MCF 10A (cell line): ENCODE measurements at regions of chr20 and their contacts with region 1.

Region 1: GRCh38 chr20:50425085-50425484 is 85.1 kb upstream of the PTPN1 start:
- DNase-seq: no peak
- H3K4me3 Mint-ChIP-seq: no peak overlapping the region
- H3K27ac Mint-ChIP-seq: peak overlapping the region; percentile 92
- H3K4me1 Mint-ChIP-seq: peaks cover 48% of the 10 kb centered on the region
- H3K27me3 Mint-ChIP-seq: no peaks in the 10 kb centered on the region
- CTCF ChIP-seq: no peak

Region 2: GRCh38 chr20:50115591-50116372 is 309.3 kb before region 1 on chr20:
- CTCF ChIA-PET with region 1: interaction called, 5 read pairs
- POLR2A ChIA-PET with region 1: interaction called, 16 read pairs
- intact Hi-C with region 1: no loop called
- DNase-seq: peak; percentile 97
- H3K4me3 Mint-ChIP-seq: peak overlapping the region; percentile 74
- H3K27ac Mint-ChIP-seq: peak overlapping the region; percentile 89
- H3K4me1 Mint-ChIP-seq: peaks cover 39% of the 10 kb centered on the region
- H3K27me3 Mint-ChIP-seq: no peaks in the 10 kb centered on the region
- CTCF ChIP-seq: no peak

Region 3: DNA sequence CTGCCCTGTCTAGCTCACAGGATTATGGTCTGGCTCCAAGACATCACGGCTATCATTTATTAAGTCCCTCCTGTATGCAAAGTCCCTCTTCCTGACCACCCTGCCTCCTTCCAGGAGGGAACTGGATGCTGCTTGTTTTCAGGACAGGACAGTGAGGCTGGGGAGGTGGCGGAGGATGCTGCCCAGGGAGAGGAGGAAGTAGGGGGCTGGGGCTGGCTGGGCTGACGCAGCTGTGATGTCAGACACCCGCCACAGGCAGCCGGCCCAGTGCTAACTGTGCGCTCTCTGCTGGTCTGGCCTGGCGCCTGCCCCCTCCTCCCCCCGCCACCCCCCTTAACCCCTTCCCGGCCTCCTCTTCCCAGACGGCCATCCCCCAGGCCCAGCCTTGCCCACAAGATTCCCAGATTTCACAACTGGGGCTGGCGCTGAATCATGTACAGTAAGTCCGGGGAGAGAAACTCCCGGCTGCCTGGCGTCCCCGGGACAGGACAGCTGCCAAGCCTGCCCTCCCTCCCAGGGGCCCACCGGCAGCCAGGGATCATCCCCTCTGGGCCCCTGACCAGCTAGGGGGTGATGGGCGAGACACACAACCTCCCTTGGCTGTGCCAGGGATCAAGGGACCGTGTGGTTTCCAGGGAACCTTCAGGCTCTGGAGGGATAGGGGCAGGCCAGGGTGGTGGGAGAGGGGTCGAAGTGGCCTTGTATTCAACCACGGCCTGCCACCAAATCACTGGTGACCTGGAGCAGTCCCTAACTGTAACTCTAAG is 116.4 kb before region 1 on chr20:
- CTCF ChIA-PET with region 1: interaction called, 4 read pairs
- POLR2A ChIA-PET with region 1: interaction called, 13 read pairs
- intact Hi-C with region 1: no loop called
- DNase-seq: peak; percentile 99
- H3K4me3 Mint-ChIP-seq: no peak overlapping the region
- H3K27ac Mint-ChIP-seq: peak overlapping the region; percentile 49
- H3K4me1 Mint-ChIP-seq: peaks cover 66% of the 10 kb centered on the region
- H3K27me3 Mint-ChIP-seq: no peaks in the 10 kb centered on the region
- CTCF ChIP-seq: peak; percentile 6

Region 4: DNA sequence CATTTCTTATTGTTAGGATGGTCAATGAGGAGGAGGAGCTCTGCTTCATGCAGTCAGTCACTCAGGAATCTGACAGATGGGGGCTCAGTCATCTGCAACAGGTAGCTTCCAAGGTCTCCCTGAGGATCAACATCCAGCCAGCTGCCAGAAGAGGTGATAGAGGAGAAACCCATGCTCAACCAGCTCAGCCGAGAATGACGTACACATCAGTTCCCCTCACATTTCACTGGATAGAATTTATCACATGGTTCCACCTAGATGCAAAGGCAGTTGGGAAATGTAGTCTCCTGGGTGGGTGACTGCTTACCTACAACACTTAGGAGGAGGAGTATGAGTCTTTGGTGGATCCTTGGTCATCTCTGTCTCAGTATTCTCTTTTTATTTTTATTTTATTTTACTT is 90.0 kb before region 1 on chr20:
- CTCF ChIA-PET with region 1: interaction called, 7 read pairs
- POLR2A ChIA-PET with region 1: interaction called, 27 read pairs
- intact Hi-C with region 1: no loop called
- DNase-seq: peak; percentile 79
- H3K4me3 Mint-ChIP-seq: no peak overlapping the region
- H3K27ac Mint-ChIP-seq: peak overlapping the region; percentile 91
- H3K4me1 Mint-ChIP-seq: peaks cover 49% of the 10 kb centered on the region
- H3K27me3 Mint-ChIP-seq: no peaks in the 10 kb centered on the region
- CTCF ChIP-seq: no peak

Region 5: DNA sequence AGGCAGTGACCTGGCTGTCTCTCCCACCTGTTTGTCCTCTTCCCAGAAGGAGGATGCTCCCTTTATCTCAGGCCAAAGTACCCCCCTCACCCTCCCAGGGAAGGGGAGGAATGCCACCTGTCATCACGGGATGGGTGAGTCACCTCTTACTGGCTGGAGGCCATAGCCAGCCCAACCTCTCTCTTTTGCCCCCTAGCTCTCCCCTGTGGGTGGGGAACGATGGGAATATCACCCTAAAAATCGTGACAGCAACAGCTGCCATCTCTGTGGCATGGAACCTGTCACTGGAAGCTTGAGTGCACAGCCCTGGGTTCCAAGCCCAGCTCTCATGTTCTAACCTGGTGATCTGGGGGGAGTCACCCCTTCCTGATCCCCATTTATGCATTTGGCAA is 52.3 kb before region 1 on chr20:
- CTCF ChIA-PET with region 1: interaction called, 3 read pairs
- POLR2A ChIA-PET with region 1: interaction called, 32 read pairs
- intact Hi-C with region 1: no loop called
- DNase-seq: peak; percentile 68
- H3K4me3 Mint-ChIP-seq: peak overlapping the region; percentile 40
- H3K27ac Mint-ChIP-seq: peak overlapping the region; percentile 90
- H3K4me1 Mint-ChIP-seq: peaks cover 70% of the 10 kb centered on the region
- H3K27me3 Mint-ChIP-seq: no peaks in the 10 kb centered on the region
- CTCF ChIP-seq: no peak

Region 6: DNA sequence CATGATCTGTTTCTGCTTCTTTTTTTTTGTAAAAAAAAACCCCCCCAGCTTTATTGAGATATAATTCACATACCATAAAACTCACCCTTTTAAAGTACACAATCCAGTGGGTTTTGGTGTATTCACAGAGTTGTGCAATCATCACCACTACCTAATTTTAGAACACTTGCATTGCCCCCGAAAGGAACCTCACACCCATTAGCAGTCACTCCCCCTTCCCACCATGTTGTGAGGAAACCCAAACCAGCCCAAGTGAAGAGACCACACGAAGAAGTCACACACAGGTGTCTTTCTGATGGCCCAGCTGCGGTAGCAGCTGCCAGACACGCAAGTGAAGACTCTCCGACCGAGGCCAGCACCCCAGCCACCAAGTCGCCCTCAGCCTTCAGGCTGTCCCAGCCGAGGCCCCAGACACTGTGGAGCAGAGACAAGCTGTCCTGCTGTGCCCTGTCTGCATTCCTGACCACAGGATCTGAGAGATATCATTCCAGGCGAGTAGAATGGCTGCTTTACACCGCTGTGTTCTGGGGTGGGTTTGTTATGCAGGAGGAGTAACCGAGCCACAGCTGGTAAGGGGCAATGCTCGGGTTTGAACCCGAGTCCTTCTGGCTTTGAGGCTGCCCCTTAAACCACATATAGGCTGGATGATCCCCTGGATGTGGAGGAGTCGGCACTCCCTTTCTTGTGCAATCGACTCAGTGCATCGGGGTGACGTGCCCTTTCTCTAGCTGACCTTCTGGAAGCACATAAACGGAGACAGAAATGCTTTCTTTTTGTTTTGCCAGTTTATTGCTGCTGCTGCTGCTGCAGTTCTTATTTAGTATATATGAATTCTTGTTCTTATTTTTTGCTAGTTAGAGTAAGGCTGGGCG is 26.0 kb after region 1 on chr20:
- CTCF ChIA-PET with region 1: interaction called, 4 read pairs
- POLR2A ChIA-PET with region 1: interaction called, 35 read pairs
- intact Hi-C with region 1: no loop called
- DNase-seq: peak; percentile 82
- H3K4me3 Mint-ChIP-seq: peak overlapping the region; percentile 53
- H3K27ac Mint-ChIP-seq: peak overlapping the region; percentile 66
- H3K4me1 Mint-ChIP-seq: peaks cover 28% of the 10 kb centered on the region
- H3K27me3 Mint-ChIP-seq: no peaks in the 10 kb centered on the region
- CTCF ChIP-seq: no peak